Mammary epithelial cell (primary cell): ENCODE measurements at regions of chr22 and their contacts with region 1.

Region 1: DNA sequence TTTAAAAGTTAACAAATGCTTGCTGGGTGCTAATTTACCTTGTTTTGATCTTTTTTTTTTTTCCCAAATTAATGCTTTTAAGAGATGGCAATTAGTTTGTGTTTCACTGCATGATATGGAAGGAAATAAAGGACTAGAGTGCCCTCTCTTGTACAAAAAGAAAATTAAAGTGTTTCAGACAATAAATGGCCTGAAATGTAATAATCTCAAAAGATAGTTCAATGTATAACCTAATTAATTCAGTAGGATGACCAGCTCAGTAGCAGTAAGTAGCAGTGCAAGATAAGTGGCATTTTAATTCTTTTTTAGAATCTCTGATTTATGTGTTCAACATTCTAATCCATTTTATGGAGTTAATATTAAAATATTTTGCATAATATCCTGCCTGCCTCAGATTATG is 39.9 kb upstream of the MYO18B start:
- DNase-seq: peak; percentile 2
- H3K4me3 ChIP-seq: no peak overlapping the region
- H3K27ac ChIP-seq: no peak overlapping the region
- H3K4me1 ChIP-seq: peaks cover 3% of the 10 kb centered on the region
- H3K27me3 ChIP-seq: no peaks in the 10 kb centered on the region
- CTCF ChIP-seq: peak; percentile 17 to 49

Region 2: GRCh38 chr22:25447686-25448434 is 254.2 kb before region 1 on chr22:
- CTCF ChIA-PET with region 1: no interaction called
- dilution Hi-C with region 1: no loop called
- in situ Hi-C with region 1: loop called in 1 of 2 experiments (anchors 10 kb)
- intact Hi-C with region 1: loop called (anchors 5 kb)
- DNase-seq: peak; percentile 80
- H3K4me3 ChIP-seq: peak overlapping the region; percentile 80 to 93 (median 90)
- H3K27ac ChIP-seq: peak overlapping the region; percentile 82
- H3K4me1 ChIP-seq: peaks cover 21% of the 10 kb centered on the region
- H3K27me3 ChIP-seq: no peaks in the 10 kb centered on the region
- CTCF ChIP-seq: peak; percentile 88 to 94

Region 3: GRCh38 chr22:25546751-25547150 is 155.3 kb before region 1 on chr22:
- CTCF ChIA-PET with region 1: no interaction called
- dilution Hi-C with region 1: no loop called
- in situ Hi-C with region 1: no loop called
- intact Hi-C with region 1: loop called (anchors 1 kb)
- DNase-seq: no peak
- H3K4me3 ChIP-seq: no peak overlapping the region
- H3K27ac ChIP-seq: no peak overlapping the region
- H3K4me1 ChIP-seq: no peaks in the 10 kb centered on the region
- H3K27me3 ChIP-seq: no peaks in the 10 kb centered on the region
- CTCF ChIP-seq: no peak

Region 4: DNA sequence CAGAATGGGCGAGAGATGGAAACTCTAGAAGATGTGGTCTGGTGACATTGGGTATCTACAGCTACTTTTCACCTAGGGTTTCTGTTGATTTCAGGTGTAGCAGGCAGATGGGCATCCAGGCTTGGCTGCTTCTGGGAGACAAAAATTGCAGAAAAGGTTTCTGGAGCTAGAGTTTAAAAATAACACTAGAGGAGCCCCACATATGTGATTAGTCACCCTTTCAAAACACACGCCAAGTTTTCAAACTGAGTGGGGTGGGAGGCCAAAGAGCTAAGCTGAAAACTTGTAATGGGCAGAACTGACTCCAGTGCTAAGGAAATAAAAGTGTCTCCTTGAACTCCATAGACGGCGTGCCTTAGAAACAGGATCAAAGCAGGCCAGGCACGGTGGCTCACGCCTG is 56.8 kb before region 1 on chr22:
- CTCF ChIA-PET with region 1: no interaction called
- dilution Hi-C with region 1: no loop called
- in situ Hi-C with region 1: no loop called
- intact Hi-C with region 1: no loop called
- DNase-seq: no peak
- H3K4me3 ChIP-seq: no peak overlapping the region
- H3K27ac ChIP-seq: no peak overlapping the region
- H3K4me1 ChIP-seq: peaks cover 6% of the 10 kb centered on the region
- H3K27me3 ChIP-seq: no peaks in the 10 kb centered on the region
- CTCF ChIP-seq: no peak

Region 5: GRCh38 chr22:25690796-25691195 is 11.2 kb before region 1 on chr22:
- CTCF ChIA-PET with region 1: no interaction called
- dilution Hi-C with region 1: no loop called
- in situ Hi-C with region 1: no loop called
- intact Hi-C with region 1: no loop called
- DNase-seq: no peak
- H3K4me3 ChIP-seq: no peak overlapping the region
- H3K27ac ChIP-seq: no peak overlapping the region
- H3K4me1 ChIP-seq: no peaks in the 10 kb centered on the region
- H3K27me3 ChIP-seq: no peaks in the 10 kb centered on the region
- CTCF ChIP-seq: no peak

Region 6: DNA sequence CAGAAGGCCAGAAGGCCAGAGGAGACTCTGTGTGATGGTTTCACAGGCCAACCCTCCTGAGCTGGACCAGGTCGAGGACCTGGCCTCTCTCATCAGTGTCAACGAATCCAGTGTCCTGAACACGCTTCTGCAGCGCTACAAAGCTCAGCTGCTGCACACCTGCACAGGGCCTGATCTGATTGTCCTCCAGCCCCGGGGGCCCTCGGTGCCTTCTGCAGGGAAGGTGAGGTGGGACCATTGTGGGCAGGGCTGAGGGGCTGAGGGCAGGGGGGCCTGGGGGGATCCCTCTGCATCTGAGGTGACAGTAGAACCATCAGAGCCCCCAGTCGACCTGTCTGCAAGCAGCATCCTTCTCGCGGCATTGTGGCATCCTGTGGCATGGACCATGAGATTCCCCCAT is 70.2 kb after region 1 on chr22:
- CTCF ChIA-PET with region 1: no interaction called
- dilution Hi-C with region 1: no loop called
- in situ Hi-C with region 1: no loop called
- intact Hi-C with region 1: loop called (anchors 2 kb)
- DNase-seq: no peak
- H3K4me3 ChIP-seq: no peak overlapping the region
- H3K27ac ChIP-seq: no peak overlapping the region
- H3K4me1 ChIP-seq: no peaks in the 10 kb centered on the region
- H3K27me3 ChIP-seq: no peaks in the 10 kb centered on the region
- CTCF ChIP-seq: no peak

Region 7: GRCh38 chr22:26330966-26331625 is 629.1 kb after region 1 on chr22:
- CTCF ChIA-PET with region 1: no interaction called
- dilution Hi-C with region 1: no loop called
- in situ Hi-C with region 1: no loop called
- intact Hi-C with region 1: loop called (anchors 5 kb)
- DNase-seq: peak; percentile 57
- H3K4me3 ChIP-seq: no peak overlapping the region
- H3K27ac ChIP-seq: no peak overlapping the region
- H3K4me1 ChIP-seq: no peaks in the 10 kb centered on the region
- H3K27me3 ChIP-seq: no peaks in the 10 kb centered on the region
- CTCF ChIP-seq: peak; percentile 92